BJ (cell line): ENCODE measurements at regions of chr2 and their contacts with region 1.

Region 1: GRCh38 chr2:181128199-181128598 is 147.8 kb downstream of the UBE2E3 start:
- DNase-seq: no peak
- H3K4me3 ChIP-seq: no peak overlapping the region
- H3K27me3 ChIP-seq: no peaks in the 10 kb centered on the region
- CTCF ChIP-seq: no peak

Region 2: GRCh38 chr2:181145645-181146044 is 17.4 kb after region 1 on chr2:
- CTCF ChIA-PET with region 1: no interaction called
- POLR2A ChIA-PET with region 1: interaction called, 11 read pairs
- DNase-seq: no peak
- H3K4me3 ChIP-seq: no peak overlapping the region
- H3K27me3 ChIP-seq: no peaks in the 10 kb centered on the region
- CTCF ChIP-seq: no peak